Posterior cingulate gyrus (tissue), 11 donors: ENCODE measurements at regions of chr1 and their contacts with region 1.

Region 1: DNA sequence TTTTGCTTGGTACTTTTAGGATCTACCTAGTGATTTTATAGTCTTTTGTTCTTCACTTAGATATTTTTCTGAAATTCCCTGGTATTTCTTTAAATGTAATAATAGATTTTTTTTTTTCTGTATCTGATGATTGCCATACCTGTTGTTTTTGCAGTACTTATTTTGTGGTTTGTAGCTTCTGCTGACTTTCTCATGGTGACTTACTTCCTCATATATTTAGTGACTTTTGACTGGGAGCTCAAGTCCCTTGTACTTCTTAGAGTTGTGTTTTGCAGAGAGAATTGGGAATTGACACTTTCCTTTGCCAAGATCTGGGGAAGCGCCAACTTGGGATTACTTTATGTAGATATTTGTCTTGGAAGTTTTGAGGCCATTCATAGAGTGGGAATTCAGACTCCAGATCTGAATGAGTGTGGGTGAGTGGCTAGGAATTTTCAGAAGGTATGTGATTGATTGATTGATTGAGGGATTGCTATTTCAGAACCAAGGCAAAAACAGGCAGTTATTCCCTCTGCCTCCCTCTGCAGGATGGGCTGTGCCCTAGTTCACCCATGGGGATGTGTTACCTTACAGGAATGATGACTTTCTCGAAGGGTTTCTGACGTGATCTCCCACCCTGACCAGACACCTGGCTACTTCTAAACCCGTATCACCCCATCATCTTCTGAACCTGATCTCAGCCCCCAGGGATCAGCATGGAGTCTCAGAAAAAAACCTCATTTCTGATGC is 219.5 kb downstream of the URB2 start:
- DNase-seq: no peak

Region 2: DNA sequence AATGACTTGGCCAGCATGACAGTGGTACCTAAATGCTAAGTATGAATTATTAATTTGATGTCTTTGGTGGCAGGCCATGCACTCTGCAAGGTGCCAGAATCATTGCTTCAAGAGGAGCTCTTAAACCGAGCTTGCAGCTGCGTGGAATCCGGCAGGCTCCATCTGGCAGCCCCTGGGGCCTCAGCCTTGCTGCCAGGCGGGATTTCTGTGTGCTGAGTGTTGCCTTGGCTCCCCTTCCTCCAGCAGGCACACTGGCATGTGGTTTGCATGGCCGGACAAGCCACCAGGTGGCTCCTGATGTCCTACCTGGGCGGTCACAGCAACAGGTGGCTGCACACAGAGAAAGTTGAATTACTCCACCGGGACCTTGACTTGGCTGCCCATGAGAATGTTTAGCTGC is 64.1 kb before region 1 on chr1:
- intact Hi-C with region 1: loop called (anchors 2 kb)
- DNase-seq: peak in 5 of 10 donors; percentile 9 to 85 (median 32)